Activated B cell treated with CpG ODN at 0.5 μM for 24 hours (primary cell): ENCODE measurements at regions of chr11 and their contacts with region 1.

Region 1: GRCh38 chr11:62880803-62881578 is at the start of gene SLC3A2:
- DNase-seq: peak; percentile 86
- ATAC-seq: peak; percentile 80
- H3K4me3 Mint-ChIP-seq: peak within 1 kb of the TSS; percentile 100
- H3K27ac Mint-ChIP-seq: peak within 1 kb of the TSS; percentile 100
- H3K4me1 Mint-ChIP-seq: peaks cover 46% of the 10 kb centered on the region
- H3K27me3 Mint-ChIP-seq: no peaks in the 10 kb centered on the region
- CTCF ChIP-seq: no peak
- total RNA-seq, gene SLC3A2: 270 and 274 TPM in 2 replicates

Region 2: DNA sequence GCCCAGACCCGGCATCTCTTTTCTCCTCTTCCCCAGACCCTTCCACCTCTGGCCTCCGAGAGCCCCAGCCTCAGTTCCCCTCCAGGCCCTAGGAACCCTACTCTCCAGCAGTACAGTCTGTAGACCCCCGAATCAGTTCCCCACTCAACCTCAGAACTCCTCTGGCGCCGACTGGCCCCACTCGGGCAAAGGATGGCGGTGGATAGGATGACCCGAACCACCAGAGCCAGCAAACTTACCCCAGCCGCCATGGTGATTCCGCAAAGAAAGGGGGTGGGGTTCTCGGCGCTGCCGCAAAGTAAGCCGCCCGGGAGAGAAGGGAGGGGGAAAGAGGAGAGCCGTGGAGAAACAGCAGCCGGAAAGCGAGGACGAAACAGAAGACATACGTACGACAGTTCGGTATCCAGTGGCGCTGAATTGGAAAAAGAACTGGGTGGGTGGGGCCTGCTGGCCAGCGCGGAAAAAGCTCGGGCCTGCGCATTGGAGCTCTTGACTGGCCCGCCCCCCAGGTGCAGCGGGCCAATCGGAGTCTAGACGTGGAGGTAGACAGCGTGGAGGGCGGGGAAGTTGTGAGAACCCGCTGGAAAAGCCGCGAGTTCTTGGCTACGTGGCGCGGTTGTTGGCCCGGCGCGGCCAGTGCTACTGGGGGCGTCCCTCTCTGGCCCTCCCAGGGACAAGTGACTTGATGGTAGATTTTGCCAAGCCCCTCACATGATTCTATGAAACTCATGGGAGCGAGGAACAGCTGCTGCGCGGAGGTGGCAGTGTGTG is 307.2 kb before region 1 on chr11 and contains the start of gene EEF1G:
- CTCF ChIA-PET with region 1: no interaction called
- POLR2A ChIA-PET with region 1: interaction called, 13 read pairs
- intact Hi-C with region 1: no loop called
- DNase-seq: peak; percentile 92
- ATAC-seq: peak; percentile 94
- H3K4me3 Mint-ChIP-seq: peak within 1 kb of the TSS; percentile 97
- H3K27ac Mint-ChIP-seq: peak within 1 kb of the TSS; percentile 94
- H3K4me1 Mint-ChIP-seq: peaks cover 51% of the 10 kb centered on the region
- H3K27me3 Mint-ChIP-seq: no peaks in the 10 kb centered on the region
- CTCF ChIP-seq: no peak
- total RNA-seq, gene EEF1G: 2,373 and 2,524 TPM in 2 replicates

Region 3: GRCh38 chr11:62665075-62665598 is 215.9 kb before region 1 on chr11 and contains the starts of genes C11orf98 and CSKMT:
- CTCF ChIA-PET with region 1: interaction called, 3 read pairs
- POLR2A ChIA-PET with region 1: interaction called, 28 read pairs
- intact Hi-C with region 1: loop called (anchors 1 kb)
- DNase-seq: peak; percentile 95
- ATAC-seq: peak; percentile 89
- H3K4me3 Mint-ChIP-seq: peak within 1 kb of the TSS; percentile 97
- H3K27ac Mint-ChIP-seq: peak within 1 kb of the TSS; percentile 88
- H3K4me1 Mint-ChIP-seq: peaks cover 45% of the 10 kb centered on the region
- H3K27me3 Mint-ChIP-seq: no peaks in the 10 kb centered on the region
- CTCF ChIP-seq: no peak
- total RNA-seq, gene C11orf98: 107 and 120 TPM in 2 replicates
- total RNA-seq, gene CSKMT: 50.5 and 52.1 TPM in 2 replicates

Region 4: DNA sequence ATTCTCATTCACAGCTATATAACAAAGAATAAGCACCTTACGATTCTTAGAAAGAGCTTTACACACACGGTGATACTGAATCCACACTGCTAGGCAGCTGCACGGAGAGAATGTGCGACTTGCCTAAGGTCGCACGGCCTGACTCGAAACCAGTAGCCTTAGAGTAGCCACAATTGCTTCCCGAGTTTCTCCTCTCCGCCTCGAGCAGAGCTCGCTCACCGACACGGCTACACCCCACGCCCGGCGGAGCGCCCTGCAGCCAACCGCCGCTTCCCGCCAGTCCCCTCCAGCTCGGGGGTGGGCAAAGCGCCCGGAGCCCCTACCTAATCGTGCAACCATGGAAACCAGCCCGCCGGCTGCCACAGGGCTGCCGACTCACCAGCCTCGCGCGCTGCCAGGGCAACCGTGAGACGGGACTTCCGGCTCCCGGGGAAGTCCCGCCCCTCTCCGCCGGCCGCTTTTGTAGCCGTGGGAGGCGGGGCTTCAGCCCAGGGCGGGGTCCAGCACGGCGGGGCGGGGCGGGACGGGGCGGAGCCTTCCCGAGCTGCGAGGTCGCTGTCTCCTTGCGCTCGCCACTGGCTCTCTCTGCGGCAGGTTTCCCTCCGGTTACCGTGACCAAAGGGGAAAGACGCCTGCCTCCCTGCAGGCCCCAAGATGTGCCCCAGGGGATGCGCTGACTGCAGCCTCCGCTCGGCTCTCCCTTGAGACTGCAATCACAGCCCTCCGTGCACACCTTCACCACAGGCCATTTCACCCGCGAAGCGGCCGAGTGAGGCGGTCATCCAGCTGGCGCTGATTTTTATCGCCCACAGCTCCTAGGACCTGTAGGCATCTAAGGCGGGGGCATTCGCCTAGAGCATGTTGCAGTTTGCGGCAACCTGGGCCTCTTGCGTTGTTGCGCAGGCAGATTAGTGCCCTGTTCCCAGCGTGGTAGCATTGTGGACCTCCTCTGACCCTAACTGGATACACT is 174.8 kb before region 1 on chr11:
- CTCF ChIA-PET with region 1: interaction called, 3 read pairs
- POLR2A ChIA-PET with region 1: interaction called, 28 read pairs
- intact Hi-C with region 1: loop called (anchors 1 kb)
- DNase-seq: peak; percentile 90
- ATAC-seq: peak; percentile 73
- H3K4me3 Mint-ChIP-seq: peak overlapping the region; percentile 92
- H3K27ac Mint-ChIP-seq: peak overlapping the region; percentile 99
- H3K4me1 Mint-ChIP-seq: peaks cover 49% of the 10 kb centered on the region
- H3K27me3 Mint-ChIP-seq: no peaks in the 10 kb centered on the region
- CTCF ChIP-seq: no peak

Region 5: GRCh38 chr11:62787005-62787759 is 93.8 kb before region 1 on chr11 and contains the start of gene TMEM179B:
- CTCF ChIA-PET with region 1: interaction called, 21 read pairs
- POLR2A ChIA-PET with region 1: interaction called, 69 read pairs
- intact Hi-C with region 1: loop called (anchors 1 kb)
- DNase-seq: peak; percentile 87
- ATAC-seq: peak; percentile 71
- H3K4me3 Mint-ChIP-seq: peak within 1 kb of the TSS; percentile 92
- H3K27ac Mint-ChIP-seq: peak within 1 kb of the TSS; percentile 89
- H3K4me1 Mint-ChIP-seq: peaks cover 42% of the 10 kb centered on the region
- H3K27me3 Mint-ChIP-seq: no peaks in the 10 kb centered on the region
- CTCF ChIP-seq: peak; percentile 66
- total RNA-seq, gene TMEM179B: 34.9 and 47.7 TPM in 2 replicates

Region 6: GRCh38 chr11:62831520-62832335 is 49.3 kb before region 1 on chr11 and contains the start of gene STX5:
- CTCF ChIA-PET with region 1: no interaction called
- POLR2A ChIA-PET with region 1: interaction called, 40 read pairs
- intact Hi-C with region 1: loop called (anchors 1 kb)
- DNase-seq: peak; percentile 98
- ATAC-seq: peak; percentile 91
- H3K4me3 Mint-ChIP-seq: peak within 1 kb of the TSS; percentile 100
- H3K27ac Mint-ChIP-seq: peak within 1 kb of the TSS; percentile 100
- H3K4me1 Mint-ChIP-seq: peaks cover 47% of the 10 kb centered on the region
- H3K27me3 Mint-ChIP-seq: no peaks in the 10 kb centered on the region
- CTCF ChIP-seq: no peak
- total RNA-seq, gene STX5: 58.4 and 71.5 TPM in 2 replicates

Region 7: GRCh38 chr11:62981743-62982142 is 100.8 kb after region 1 on chr11:
- CTCF ChIA-PET with region 1: no interaction called
- POLR2A ChIA-PET with region 1: no interaction called
- intact Hi-C with region 1: no loop called
- DNase-seq: no peak
- ATAC-seq: no peak
- H3K4me3 Mint-ChIP-seq: no peak overlapping the region
- H3K27ac Mint-ChIP-seq: no peak overlapping the region
- H3K4me1 Mint-ChIP-seq: no peaks in the 10 kb centered on the region
- H3K27me3 Mint-ChIP-seq: peaks cover 21% of the 10 kb centered on the region
- CTCF ChIP-seq: no peak

Region 8: GRCh38 chr11:63567044-63567840 is 686.3 kb after region 1 on chr11:
- CTCF ChIA-PET with region 1: no interaction called
- POLR2A ChIA-PET with region 1: interaction called, 4 read pairs
- intact Hi-C with region 1: loop called (anchors 10 kb)
- DNase-seq: peak; percentile 44
- ATAC-seq: peak; percentile 79
- H3K4me3 Mint-ChIP-seq: peak overlapping the region; percentile 78
- H3K27ac Mint-ChIP-seq: peak overlapping the region; percentile 96
- H3K4me1 Mint-ChIP-seq: peaks cover 58% of the 10 kb centered on the region
- H3K27me3 Mint-ChIP-seq: peaks cover 5% of the 10 kb centered on the region
- CTCF ChIP-seq: no peak